ENCODE measurements at regions of chr2 and their contacts with region 1.

Region 1: GRCh38 chr2:110847651-110848050 is 115.3 kb downstream of the ACOXL start:
- DNase-seq: no peak
- H3K4me3 Mint-ChIP-seq: no peak overlapping the region
- H3K27ac Mint-ChIP-seq: peak overlapping the region; percentile 99
- H3K4me1 Mint-ChIP-seq: peaks cover 82% of the 10 kb centered on the region
- H3K27me3 Mint-ChIP-seq: peaks cover 3% of the 10 kb centered on the region

Region 2: DNA sequence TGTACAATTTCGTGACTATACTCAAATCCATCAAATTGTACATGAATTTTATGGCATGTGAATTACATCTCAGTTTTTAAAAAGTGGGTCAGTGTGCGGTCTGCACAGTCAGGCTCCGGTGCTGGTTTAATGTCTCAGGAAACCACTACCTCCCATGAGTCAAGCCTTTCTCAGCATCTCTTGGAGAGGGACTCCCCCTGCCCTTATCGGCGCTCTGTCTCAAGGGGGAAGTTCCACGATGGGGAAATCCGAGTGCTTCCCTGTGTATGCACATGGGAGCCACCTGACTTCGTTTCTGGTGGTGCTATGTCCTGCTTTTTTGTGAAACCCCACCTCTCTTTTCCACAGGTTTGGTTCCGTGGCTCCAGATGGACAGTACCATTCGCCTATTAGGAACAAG is 42.7 kb before region 1 on chr2:
- intact Hi-C with region 1: loop called (anchors 1 kb)
- DNase-seq: no peak
- H3K4me3 Mint-ChIP-seq: no peak overlapping the region
- H3K27ac Mint-ChIP-seq: peak overlapping the region; percentile 22
- H3K4me1 Mint-ChIP-seq: peaks cover 16% of the 10 kb centered on the region
- H3K27me3 Mint-ChIP-seq: peaks cover 41% of the 10 kb centered on the region

Region 3: GRCh38 chr2:110812726-110813645 is 34.7 kb before region 1 on chr2:
- intact Hi-C with region 1: loop called (anchors 1 kb)
- DNase-seq: no peak
- H3K4me3 Mint-ChIP-seq: no peak overlapping the region
- H3K27ac Mint-ChIP-seq: no peak overlapping the region
- H3K4me1 Mint-ChIP-seq: peaks cover 24% of the 10 kb centered on the region
- H3K27me3 Mint-ChIP-seq: peaks cover 14% of the 10 kb centered on the region

Region 4: DNA sequence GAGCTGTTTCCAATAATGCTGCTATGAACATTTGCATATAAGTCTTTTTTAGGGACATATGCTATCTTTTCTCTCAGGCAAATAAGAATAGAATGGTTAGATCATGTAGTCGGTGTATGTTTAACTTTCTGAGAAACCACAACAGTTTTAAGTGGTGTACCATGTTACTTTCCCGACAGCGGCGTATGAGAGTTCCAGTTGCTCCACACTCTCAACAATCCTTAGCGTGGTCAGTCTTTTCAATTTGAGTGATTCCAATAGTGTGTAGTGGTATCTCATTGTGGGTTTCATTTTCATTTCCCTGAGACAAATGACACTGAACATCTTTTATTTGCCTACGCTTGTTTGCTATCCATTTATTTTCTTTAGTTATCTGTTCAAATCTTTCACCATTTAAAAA is 34.3 kb after region 1 on chr2:
- intact Hi-C with region 1: loop called (anchors 2 kb)
- DNase-seq: no peak
- H3K4me3 Mint-ChIP-seq: no peak overlapping the region
- H3K27ac Mint-ChIP-seq: no peak overlapping the region
- H3K4me1 Mint-ChIP-seq: peaks cover 13% of the 10 kb centered on the region
- H3K27me3 Mint-ChIP-seq: peaks cover 46% of the 10 kb centered on the region

Measured in activated T-helper 2 cell treated with anti-CD3 and anti-CD28 coated beads, Interferon-gamma antibody, Interleukin-2, Interleukin-4, amounts not matched to agents 10 μg/mL and 5 μg/mL and 100 μg/mL, durations not matched to agents 14 hours and 24 hours and 36 hours (primary cell).